Breast epithelium (tissue), 4 donors: ENCODE measurements at regions of chrX and their contacts with region 1.

Region 1: GRCh38 chrX:2325076-2325784 is 175.5 kb downstream of the DHRSX start:
- DNase-seq: peak; percentile 56 to 83
- H3K4me3 ChIP-seq: peak overlapping the region in 2 of 3 donors; percentile 47 to 75
- H3K27ac ChIP-seq: peak overlapping the region; percentile 8 to 89
- H3K4me1 ChIP-seq: no peaks in the 10 kb centered on the region
- H3K27me3 ChIP-seq: no peaks in the 10 kb centered on the region
- CTCF ChIP-seq: no peak
- POLR2A ChIP-seq: no peak

Region 2: DNA sequence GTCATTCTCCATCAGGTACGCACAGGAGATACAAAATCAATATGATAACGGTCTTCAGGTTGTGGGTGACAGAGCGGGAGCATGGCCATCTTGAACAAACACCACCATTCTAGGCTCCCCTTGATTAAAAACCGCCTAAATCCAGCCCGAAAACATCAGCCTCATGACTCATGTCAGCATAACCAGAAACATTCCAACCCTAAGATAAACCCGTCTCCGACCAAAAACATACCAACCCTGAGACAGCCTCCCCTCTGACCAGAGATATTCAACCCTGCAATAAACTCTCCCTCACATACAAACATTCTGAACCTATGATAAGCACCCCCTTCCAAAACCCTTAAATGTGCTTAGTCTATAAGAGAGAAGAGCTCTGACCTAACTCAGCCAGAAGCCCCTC is 17.6 kb after region 1 on chrX:
- intact Hi-C with region 1: loop called (anchors 1 kb)
- DNase-seq: no peak
- H3K4me3 ChIP-seq: no peak overlapping the region
- H3K27ac ChIP-seq: no peak overlapping the region
- H3K4me1 ChIP-seq: no peaks in the 10 kb centered on the region
- H3K27me3 ChIP-seq: no peaks in the 10 kb centered on the region
- CTCF ChIP-seq: no peak
- POLR2A ChIP-seq: no peak